ENCODE measurements at regions of chr4 and their contacts with region 1.

Region 1: GRCh38 chr4:48085821-48086607 is 48.0 kb downstream of the TXK start:
- DNase-seq: peak; percentile 17
- H3K4me3 Mint-ChIP-seq: no peak overlapping the region
- H3K27ac Mint-ChIP-seq: no peak overlapping the region
- H3K4me1 Mint-ChIP-seq: peaks cover 6% of the 10 kb centered on the region
- H3K27me3 Mint-ChIP-seq: no peaks in the 10 kb centered on the region
- CTCF ChIP-seq: no peak

Region 2: DNA sequence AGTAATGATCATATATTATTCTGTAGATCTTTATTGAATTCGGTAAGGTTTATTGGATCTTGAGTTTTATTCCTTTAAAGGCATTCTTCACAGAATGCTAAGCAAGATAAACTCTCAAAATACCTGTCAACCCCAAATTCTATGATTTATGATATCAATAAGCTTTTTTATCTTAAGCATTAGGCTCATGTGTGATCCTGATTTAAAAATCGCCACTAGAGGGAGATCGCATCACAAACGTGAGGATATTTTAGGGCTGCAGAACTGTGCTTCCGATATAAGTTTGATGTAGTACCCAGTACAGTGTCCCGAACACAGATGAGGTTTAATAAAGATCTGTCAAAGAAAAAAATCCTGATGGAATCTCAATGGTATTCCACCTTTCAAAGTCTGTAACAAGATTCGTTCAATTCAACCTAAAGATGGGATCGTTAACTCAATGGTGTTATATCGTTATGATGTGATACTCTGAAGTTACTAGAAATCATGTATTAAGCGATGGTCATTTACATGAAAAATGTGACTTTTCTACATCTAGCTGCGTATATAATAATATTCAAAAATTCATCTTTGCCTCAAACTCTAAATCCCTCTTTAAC is 417.1 kb before region 1 on chr4:
- CTCF ChIA-PET with region 1: interaction called, 3 read pairs
- POLR2A ChIA-PET with region 1: no interaction called
- intact Hi-C with region 1: loop called (anchors 5 kb)
- DNase-seq: peak; percentile 64
- H3K4me3 Mint-ChIP-seq: no peak overlapping the region
- H3K27ac Mint-ChIP-seq: no peak overlapping the region
- H3K4me1 Mint-ChIP-seq: peaks cover 5% of the 10 kb centered on the region
- H3K27me3 Mint-ChIP-seq: no peaks in the 10 kb centered on the region
- CTCF ChIP-seq: peak; percentile 72

Region 3: GRCh38 chr4:47926639-47927258 is 159.3 kb before region 1 on chr4:
- CTCF ChIA-PET with region 1: interaction called, 4 read pairs
- POLR2A ChIA-PET with region 1: no interaction called
- intact Hi-C with region 1: loop called (anchors 2 kb)
- DNase-seq: peak; percentile 62
- H3K4me3 Mint-ChIP-seq: peak overlapping the region; percentile 47
- H3K27ac Mint-ChIP-seq: no peak overlapping the region
- H3K4me1 Mint-ChIP-seq: peaks cover 18% of the 10 kb centered on the region
- H3K27me3 Mint-ChIP-seq: no peaks in the 10 kb centered on the region
- CTCF ChIP-seq: peak; percentile 39

Region 4: GRCh38 chr4:48002267-48002666 is 83.7 kb before region 1 on chr4:
- CTCF ChIA-PET with region 1: interaction called, 15 read pairs
- POLR2A ChIA-PET with region 1: no interaction called
- intact Hi-C with region 1: loop called (anchors 2 kb)
- DNase-seq: no peak
- H3K4me3 Mint-ChIP-seq: no peak overlapping the region
- H3K27ac Mint-ChIP-seq: no peak overlapping the region
- H3K4me1 Mint-ChIP-seq: no peaks in the 10 kb centered on the region
- H3K27me3 Mint-ChIP-seq: no peaks in the 10 kb centered on the region
- CTCF ChIP-seq: no peak

Region 5: DNA sequence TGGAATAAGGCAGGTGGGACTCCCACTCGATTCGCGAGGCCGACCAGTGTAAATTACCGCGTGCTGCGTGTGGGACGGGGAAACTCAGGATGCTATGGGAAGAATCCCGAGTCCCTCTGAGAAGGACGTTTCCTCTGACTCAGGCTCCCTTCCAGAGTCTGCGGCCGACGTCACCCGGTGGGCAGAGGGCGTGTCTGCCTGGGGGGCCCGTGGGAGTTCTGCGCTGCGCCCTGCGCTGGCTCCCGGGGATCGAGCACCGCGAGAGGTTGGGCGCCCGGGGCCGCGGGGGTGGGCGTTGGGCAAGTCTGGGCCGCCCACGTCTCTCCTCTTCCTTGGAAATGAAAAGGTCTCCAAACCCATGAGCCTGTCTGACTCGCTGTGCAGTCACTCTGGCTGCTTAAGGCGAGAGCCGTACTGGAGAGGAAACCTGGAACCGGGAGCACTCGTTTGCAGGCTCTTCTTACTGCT is 68.9 kb before region 1 on chr4:
- CTCF ChIA-PET with region 1: interaction called, 12 read pairs
- POLR2A ChIA-PET with region 1: no interaction called
- intact Hi-C with region 1: no loop called
- DNase-seq: peak; percentile 83
- H3K4me3 Mint-ChIP-seq: peak overlapping the region; percentile 86
- H3K27ac Mint-ChIP-seq: peak overlapping the region; percentile 63
- H3K4me1 Mint-ChIP-seq: peaks cover 5% of the 10 kb centered on the region
- H3K27me3 Mint-ChIP-seq: no peaks in the 10 kb centered on the region
- CTCF ChIP-seq: no peak

Region 6: GRCh38 chr4:48033825-48034413 is 52.1 kb before region 1 on chr4:
- CTCF ChIA-PET with region 1: interaction called, 42 read pairs
- POLR2A ChIA-PET with region 1: no interaction called
- intact Hi-C with region 1: loop called (anchors 2 kb)
- DNase-seq: peak; percentile 50
- H3K4me3 Mint-ChIP-seq: no peak overlapping the region
- H3K27ac Mint-ChIP-seq: no peak overlapping the region
- H3K4me1 Mint-ChIP-seq: no peaks in the 10 kb centered on the region
- H3K27me3 Mint-ChIP-seq: no peaks in the 10 kb centered on the region
- CTCF ChIP-seq: peak; percentile 40

Region 7: GRCh38 chr4:48360285-48361010 is 274.4 kb after region 1 on chr4:
- CTCF ChIA-PET with region 1: no interaction called
- POLR2A ChIA-PET with region 1: no interaction called
- intact Hi-C with region 1: no loop called
- DNase-seq: peak; percentile 59
- H3K4me3 Mint-ChIP-seq: peak overlapping the region; percentile 38
- H3K27ac Mint-ChIP-seq: peak overlapping the region; percentile 82
- H3K4me1 Mint-ChIP-seq: peaks cover 24% of the 10 kb centered on the region
- H3K27me3 Mint-ChIP-seq: no peaks in the 10 kb centered on the region
- CTCF ChIP-seq: no peak